Naive thymus-derived CD4-positive, alpha-beta T cell (primary cell): ENCODE measurements at regions of chr17 and their contacts with region 1.

Region 1: GRCh38 chr17:32319548-32319905 is 22.4 kb downstream of the C17orf75 start:
- DNase-seq: peak; percentile 47 to 85 (median 60)
- ATAC-seq: peak; percentile 89
- H3K4me3 ChIP-seq: no peak overlapping the region
- H3K4me3 Mint-ChIP-seq: peak overlapping the region; percentile 67 to 87 (median 74)
- H3K27ac ChIP-seq: no peak overlapping the region
- H3K27ac Mint-ChIP-seq: peak overlapping the region in 1 of 9 donors; percentile 66
- H3K4me1 ChIP-seq: peaks cover 0 to 13% of the 10 kb centered on the region in 2 donors
- H3K4me1 Mint-ChIP-seq: peaks cover 8 to 37% (median 11%) of the 10 kb centered on the region in 7 donors
- H3K27me3 ChIP-seq: no peaks in the 10 kb centered on the region
- H3K27me3 Mint-ChIP-seq: peaks cover 3 to 26% (median 5%) of the 10 kb centered on the region in 5 donors

Region 2: GRCh38 chr17:32206861-32207260 is 112.7 kb before region 1 on chr17:
- CTCF ChIA-PET with region 1: interaction called, 4 read pairs
- POLR2A ChIA-PET with region 1: no interaction called
- intact Hi-C with region 1: loop called (anchors 1 to 5 kb)
- DNase-seq: no peak
- ATAC-seq: no peak
- H3K4me3 ChIP-seq: no peak overlapping the region
- H3K4me3 Mint-ChIP-seq: no peak overlapping the region
- H3K27ac ChIP-seq: no peak overlapping the region
- H3K27ac Mint-ChIP-seq: no peak overlapping the region
- H3K4me1 ChIP-seq: no peaks in the 10 kb centered on the region
- H3K4me1 Mint-ChIP-seq: peaks cover 0 to 2% (median 0%) of the 10 kb centered on the region in 7 donors
- H3K27me3 ChIP-seq: no peaks in the 10 kb centered on the region
- H3K27me3 Mint-ChIP-seq: no peaks in the 10 kb centered on the region

Region 3: DNA sequence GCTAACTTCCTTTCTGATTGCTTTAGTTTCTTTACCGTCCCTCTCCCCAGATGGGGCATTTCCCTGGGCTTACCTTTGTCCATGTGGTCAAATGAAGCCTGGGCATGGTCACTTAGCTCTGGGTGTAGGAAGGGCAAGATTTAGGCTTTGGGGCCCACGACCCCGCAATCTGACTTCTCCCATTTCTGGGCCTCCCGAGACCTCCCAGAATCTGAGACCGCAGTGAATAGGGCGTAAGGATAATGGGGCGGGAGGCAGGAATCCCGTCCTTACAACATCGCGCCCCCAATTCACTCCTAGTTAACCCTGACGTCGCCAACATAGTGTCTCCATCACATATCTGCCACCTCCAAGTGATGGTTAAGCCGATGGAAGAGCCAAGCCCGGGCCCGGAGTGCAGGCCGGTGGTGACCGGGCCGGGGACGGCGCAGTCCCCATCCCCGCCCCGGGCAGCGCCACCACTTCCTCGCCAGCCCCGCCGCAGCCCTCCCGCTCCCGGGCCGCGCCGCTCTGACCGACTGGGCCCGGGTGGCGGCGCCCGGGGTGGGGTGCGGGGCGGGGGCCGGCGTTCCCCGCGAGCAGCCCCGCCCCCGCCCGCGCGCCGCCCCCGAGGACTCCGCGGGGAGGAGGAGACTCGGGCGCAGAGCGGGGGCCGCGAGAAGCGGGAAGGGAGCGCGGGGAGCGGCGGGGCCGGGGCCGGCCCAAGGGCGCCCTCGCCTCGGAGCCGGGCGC is 54.2 kb before region 1 on chr17 and contains the start of gene RHBDL3:
- CTCF ChIA-PET with region 1: no interaction called
- POLR2A ChIA-PET with region 1: no interaction called
- intact Hi-C with region 1: loop called in 1 of 2 experiments (anchors 5 kb)
- DNase-seq: peak in 3 of 9 donors; percentile 16 to 36 (median 20)
- ATAC-seq: peak; percentile 65
- H3K4me3 ChIP-seq: peak within 1 kb of the TSS; percentile 56
- H3K4me3 Mint-ChIP-seq: peak within 1 kb of the TSS; percentile 62 to 88 (median 80)
- H3K27ac ChIP-seq: no peak within 1 kb of the TSS
- H3K27ac Mint-ChIP-seq: peak within 1 kb of the TSS in 2 of 9 donors; percentile 18 to 56
- H3K4me1 ChIP-seq: peaks cover 7 to 10% of the 10 kb centered on the region in 2 donors
- H3K4me1 Mint-ChIP-seq: peaks cover 8 to 30% (median 19%) of the 10 kb centered on the region in 7 donors
- H3K27me3 ChIP-seq: peaks cover 6 to 14% of the 10 kb centered on the region in 2 donors
- H3K27me3 Mint-ChIP-seq: peaks cover 43 to 83% (median 59%) of the 10 kb centered on the region in 5 donors
- total RNA-seq, gene RHBDL3: 0.07 to 0.39 TPM in 2 of 5 experiments, not detected in the others

Region 4: DNA sequence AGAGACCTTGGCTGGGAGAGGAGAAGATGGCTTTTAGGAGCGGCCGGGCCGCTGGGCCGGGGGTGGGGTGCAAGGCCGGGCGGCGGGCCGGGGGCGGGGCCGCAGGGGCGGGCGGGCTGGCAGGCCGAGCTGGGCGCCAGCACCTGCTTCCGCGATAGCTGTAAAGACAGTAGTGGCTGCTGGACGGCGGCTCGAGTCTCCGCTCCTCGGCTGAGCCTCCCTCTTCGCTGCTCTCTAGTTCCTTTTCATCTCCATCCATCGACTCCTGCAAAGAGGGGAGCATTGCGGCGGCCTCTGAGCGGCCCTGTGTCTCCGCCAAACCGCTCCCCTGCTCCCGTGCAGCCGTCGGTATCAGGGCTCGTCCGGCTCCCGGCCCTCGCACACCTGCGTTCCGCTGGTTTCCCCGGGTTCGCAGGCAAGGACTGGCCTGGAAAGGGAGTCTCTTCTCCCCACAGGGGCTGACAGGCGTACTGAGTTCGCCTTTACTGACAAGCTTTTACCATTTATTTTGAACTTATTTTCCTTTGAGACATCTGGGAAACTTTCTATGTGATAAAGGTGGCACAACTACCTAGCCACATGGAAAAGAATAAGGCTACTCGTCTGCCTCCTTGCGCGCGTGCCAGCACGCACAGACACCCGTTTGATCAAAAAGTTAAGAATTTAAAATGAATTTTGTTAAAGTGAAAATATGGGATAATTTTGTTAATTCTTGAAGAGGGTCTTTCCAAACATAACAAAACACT is 22.5 kb after region 1 on chr17 and contains the start of gene C17orf75:
- CTCF ChIA-PET with region 1: no interaction called
- POLR2A ChIA-PET with region 1: interaction called, 3 read pairs
- intact Hi-C with region 1: loop called in 1 of 2 experiments (anchors 1 kb)
- DNase-seq: peak; percentile 63 to 81 (median 76)
- ATAC-seq: peak; percentile 92
- H3K4me3 ChIP-seq: peak within 1 kb of the TSS; percentile 64
- H3K4me3 Mint-ChIP-seq: peak within 1 kb of the TSS; percentile 83 to 94 (median 92)
- H3K27ac ChIP-seq: peak within 1 kb of the TSS; percentile 80
- H3K27ac Mint-ChIP-seq: peak within 1 kb of the TSS; percentile 83 to 96 (median 93)
- H3K4me1 ChIP-seq: peaks cover 5 to 9% of the 10 kb centered on the region in 2 donors
- H3K4me1 Mint-ChIP-seq: peaks cover 19 to 33% (median 25%) of the 10 kb centered on the region in 7 donors
- H3K27me3 ChIP-seq: no peaks in the 10 kb centered on the region
- H3K27me3 Mint-ChIP-seq: no peaks in the 10 kb centered on the region
- total RNA-seq, gene C17orf75: 14.2 to 22.0 (median 17.9) TPM